CD8-positive, alpha-beta T cell (primary cell): ENCODE measurements at regions of chr19 and their contacts with region 1.

Region 1: GRCh38 chr19:10946964-10947657 is 13.7 kb upstream of the SMARCA4 start:
- DNase-seq: no peak
- ATAC-seq: no peak
- H3K4me3 ChIP-seq: no peak overlapping the region
- H3K4me3 Mint-ChIP-seq: no peak overlapping the region
- H3K27ac ChIP-seq: no peak overlapping the region
- H3K27ac Mint-ChIP-seq: no peak overlapping the region
- H3K4me1 ChIP-seq: no peaks in the 10 kb centered on the region
- H3K4me1 Mint-ChIP-seq: peaks cover 4% of the 10 kb centered on the region
- H3K27me3 ChIP-seq: no peaks in the 10 kb centered on the region
- H3K27me3 Mint-ChIP-seq: no peaks in the 10 kb centered on the region
- CTCF ChIP-seq: no peak

Region 2: GRCh38 chr19:10923260-10924112 is 23.6 kb before region 1 on chr19:
- CTCF ChIA-PET with region 1: no interaction called
- POLR2A ChIA-PET with region 1: no interaction called
- intact Hi-C with region 1: no loop called
- DNase-seq: peak in 1 of 9 experiments; percentile 7
- ATAC-seq: no peak
- H3K4me3 ChIP-seq: no peak overlapping the region
- H3K4me3 Mint-ChIP-seq: no peak overlapping the region
- H3K27ac ChIP-seq: no peak overlapping the region
- H3K27ac Mint-ChIP-seq: no peak overlapping the region
- H3K4me1 ChIP-seq: peaks cover 10% of the 10 kb centered on the region
- H3K4me1 Mint-ChIP-seq: peaks cover 12% of the 10 kb centered on the region
- H3K27me3 ChIP-seq: no peaks in the 10 kb centered on the region
- H3K27me3 Mint-ChIP-seq: no peaks in the 10 kb centered on the region
- CTCF ChIP-seq: no peak

Region 3: DNA sequence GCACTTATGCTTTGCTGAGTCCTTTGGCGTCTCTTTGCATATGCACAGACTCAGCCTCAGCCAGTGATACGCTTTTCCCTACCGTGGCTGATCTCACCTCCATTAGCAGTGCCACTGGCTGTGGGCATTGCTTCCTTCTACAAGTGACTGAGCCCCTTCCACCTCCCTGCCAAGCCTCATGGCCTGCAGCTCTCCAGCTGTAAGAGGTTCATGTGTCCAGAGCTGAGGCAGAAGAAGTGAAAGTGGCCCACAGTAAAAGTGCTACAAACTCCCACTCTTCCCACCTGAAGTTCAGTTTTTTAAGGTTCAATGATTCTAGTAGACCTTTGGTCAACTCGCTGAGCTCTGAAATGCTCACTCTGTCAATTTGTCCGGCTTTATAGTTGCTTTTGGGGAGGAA is 58.4 kb after region 1 on chr19:
- CTCF ChIA-PET with region 1: interaction called, 11 read pairs
- POLR2A ChIA-PET with region 1: no interaction called
- intact Hi-C with region 1: loop called in 1 of 2 experiments (anchors 10 kb)
- DNase-seq: no peak
- ATAC-seq: no peak
- H3K4me3 ChIP-seq: no peak overlapping the region
- H3K4me3 Mint-ChIP-seq: no peak overlapping the region
- H3K27ac ChIP-seq: no peak overlapping the region
- H3K27ac Mint-ChIP-seq: no peak overlapping the region
- H3K4me1 ChIP-seq: no peaks in the 10 kb centered on the region
- H3K4me1 Mint-ChIP-seq: no peaks in the 10 kb centered on the region
- H3K27me3 ChIP-seq: no peaks in the 10 kb centered on the region
- H3K27me3 Mint-ChIP-seq: no peaks in the 10 kb centered on the region
- CTCF ChIP-seq: no peak